Endothelial cell of umbilical vein (primary cell): ENCODE measurements at regions of chr11 and their contacts with region 1.

Region 1: DNA sequence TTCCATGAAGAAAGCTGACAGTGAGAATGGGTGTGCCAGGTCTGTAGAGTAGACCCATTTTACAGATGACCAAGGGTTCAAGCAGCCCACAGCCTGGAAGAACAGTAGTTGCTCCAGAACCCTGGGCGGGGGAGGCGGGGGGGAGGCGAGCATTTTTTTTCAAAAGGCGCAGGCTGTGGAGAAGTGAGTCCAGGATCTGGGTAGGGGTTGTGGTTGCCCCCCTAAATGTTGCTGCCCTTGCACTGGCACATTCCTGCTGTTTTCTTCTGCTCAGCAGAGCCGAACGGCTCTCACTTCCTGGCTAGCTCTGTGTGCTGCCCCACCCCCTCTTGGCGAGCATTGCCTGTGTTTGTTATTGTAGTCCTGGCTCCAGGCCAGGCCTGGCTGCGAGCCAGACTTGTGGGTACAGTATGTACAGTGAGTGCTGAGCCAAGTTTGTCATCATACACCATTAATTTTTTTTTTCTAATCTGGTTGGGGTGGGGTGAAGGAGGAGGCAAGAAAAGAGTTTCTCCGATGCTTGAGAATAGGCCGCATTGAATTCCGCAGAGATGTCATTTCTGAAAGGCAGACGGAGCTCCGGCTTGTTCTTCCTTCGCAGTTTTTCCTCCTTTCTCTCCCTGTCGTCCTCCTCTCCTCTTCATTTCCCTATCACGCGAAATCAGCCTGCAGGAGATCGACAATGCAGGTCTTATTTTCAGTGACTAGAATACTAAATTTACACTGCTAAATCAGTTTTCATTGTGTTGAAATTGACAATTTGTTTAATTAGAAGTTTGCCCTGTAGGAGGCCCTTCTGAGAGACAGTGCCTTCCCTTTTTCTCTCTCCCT is 100.5 kb downstream of the ZBTB16 start:
- DNase-seq: peak; percentile 99
- H3K4me3 ChIP-seq: peak overlapping the region in 1 of 3 experiments; percentile 6
- H3K27ac ChIP-seq: peak overlapping the region; percentile 91
- H3K4me1 ChIP-seq: peaks cover 54% of the 10 kb centered on the region
- H3K27me3 ChIP-seq: no peaks in the 10 kb centered on the region
- CTCF ChIP-seq: no peak
- POLR2A ChIP-seq: peak; percentile 73

Region 2: GRCh38 chr11:114036156-114036811 is 123.7 kb before region 1 on chr11:
- CTCF ChIA-PET with region 1: interaction called, 5 read pairs
- POLR2A ChIA-PET with region 1: no interaction called
- dilution Hi-C with region 1: no loop called
- intact Hi-C with region 1: loop called (anchors 1 kb)
- DNase-seq: peak; percentile 73
- H3K4me3 ChIP-seq: peak overlapping the region; percentile 30 to 46 (median 45)
- H3K27ac ChIP-seq: peak overlapping the region; percentile 56
- H3K4me1 ChIP-seq: peaks cover 15% of the 10 kb centered on the region
- H3K27me3 ChIP-seq: peaks cover 0 to 1% of the 10 kb centered on the region in 2 experiments
- CTCF ChIP-seq: peak; percentile 91 to 93
- POLR2A ChIP-seq: no peak

Region 3: GRCh38 chr11:114080219-114080618 is 79.8 kb before region 1 on chr11:
- CTCF ChIA-PET with region 1: interaction called, 5 read pairs
- POLR2A ChIA-PET with region 1: no interaction called
- dilution Hi-C with region 1: no loop called
- intact Hi-C with region 1: loop called (anchors 1 kb)
- DNase-seq: peak; percentile 80
- H3K4me3 ChIP-seq: no peak overlapping the region
- H3K27ac ChIP-seq: peak overlapping the region; percentile 94
- H3K4me1 ChIP-seq: peaks cover 38% of the 10 kb centered on the region
- H3K27me3 ChIP-seq: no peaks in the 10 kb centered on the region
- CTCF ChIP-seq: no peak
- POLR2A ChIP-seq: no peak

Region 4: DNA sequence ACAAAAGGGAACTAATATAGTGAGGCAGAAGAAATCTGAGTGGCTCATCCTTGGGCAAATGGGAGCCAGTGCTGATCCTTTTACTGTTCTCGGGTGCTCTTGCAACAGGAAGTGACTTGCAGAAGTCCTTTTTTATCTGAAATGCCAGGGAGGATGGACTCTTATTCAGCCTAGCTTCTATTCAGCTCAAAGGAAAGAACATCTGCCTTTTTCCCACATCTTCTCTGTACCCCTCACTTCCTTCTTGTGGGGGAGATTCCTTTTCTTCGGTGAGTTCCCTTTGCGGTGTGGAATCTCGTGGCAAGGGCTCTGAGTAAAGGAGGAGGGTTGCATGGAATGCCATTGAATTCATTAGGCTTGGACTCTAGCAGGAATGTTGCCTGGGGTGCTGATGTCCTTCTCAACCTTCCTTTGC is 24.3 kb before region 1 on chr11:
- CTCF ChIA-PET with region 1: interaction called, 4 read pairs
- POLR2A ChIA-PET with region 1: no interaction called
- dilution Hi-C with region 1: no loop called
- intact Hi-C with region 1: loop called (anchors 1 kb)
- DNase-seq: no peak
- H3K4me3 ChIP-seq: no peak overlapping the region
- H3K27ac ChIP-seq: no peak overlapping the region
- H3K4me1 ChIP-seq: peaks cover 42% of the 10 kb centered on the region
- H3K27me3 ChIP-seq: no peaks in the 10 kb centered on the region
- CTCF ChIP-seq: no peak
- POLR2A ChIP-seq: no peak

Region 5: GRCh38 chr11:114219559-114220349 is 59.7 kb after region 1 on chr11:
- CTCF ChIA-PET with region 1: interaction called, 6 read pairs
- POLR2A ChIA-PET with region 1: interaction called, 5 read pairs
- dilution Hi-C with region 1: no loop called
- intact Hi-C with region 1: loop called (anchors 1 kb)
- DNase-seq: peak; percentile 95
- H3K4me3 ChIP-seq: no peak overlapping the region
- H3K27ac ChIP-seq: peak overlapping the region; percentile 83
- H3K4me1 ChIP-seq: peaks cover 17% of the 10 kb centered on the region
- H3K27me3 ChIP-seq: no peaks in the 10 kb centered on the region
- CTCF ChIP-seq: no peak
- POLR2A ChIP-seq: peak; percentile 42

Region 6: GRCh38 chr11:114439229-114440120 is 279.5 kb after region 1 on chr11 and contains the start of gene REXO2:
- CTCF ChIA-PET with region 1: no interaction called
- POLR2A ChIA-PET with region 1: no interaction called
- dilution Hi-C with region 1: no loop called
- intact Hi-C with region 1: no loop called
- DNase-seq: peak; percentile 96
- H3K4me3 ChIP-seq: peak within 1 kb of the TSS; percentile 49 to 97 (median 83)
- H3K27ac ChIP-seq: peak within 1 kb of the TSS; percentile 36
- H3K4me1 ChIP-seq: peaks cover 23% of the 10 kb centered on the region
- H3K27me3 ChIP-seq: no peaks in the 10 kb centered on the region
- CTCF ChIP-seq: peak in 1 of 2 donors; percentile 43
- POLR2A ChIP-seq: peak; percentile 83
- total RNA-seq, gene REXO2: 155 and 182 TPM in 2 replicates